ENCODE measurements at regions of chr19 and their contacts with region 1.

Region 1: GRCh38 chr19:42280192-42281145 is 11.4 kb downstream of the CIC start:
- DNase-seq: peak; percentile 60
- H3K4me3 ChIP-seq: peak overlapping the region; percentile 75
- H3K27ac ChIP-seq: peak overlapping the region; percentile 47
- H3K27me3 ChIP-seq: no peaks in the 10 kb centered on the region
- CTCF ChIP-seq: no peak

Region 2: GRCh38 chr19:42132851-42133528 is 147.5 kb before region 1 on chr19:
- CTCF ChIA-PET with region 1: interaction called, 11 read pairs
- POLR2A ChIA-PET with region 1: no interaction called
- DNase-seq: no peak
- H3K4me3 ChIP-seq: peak overlapping the region; percentile 60
- H3K27ac ChIP-seq: no peak overlapping the region
- H3K27me3 ChIP-seq: peaks cover 9% of the 10 kb centered on the region
- CTCF ChIP-seq: peak; percentile 85

Region 3: DNA sequence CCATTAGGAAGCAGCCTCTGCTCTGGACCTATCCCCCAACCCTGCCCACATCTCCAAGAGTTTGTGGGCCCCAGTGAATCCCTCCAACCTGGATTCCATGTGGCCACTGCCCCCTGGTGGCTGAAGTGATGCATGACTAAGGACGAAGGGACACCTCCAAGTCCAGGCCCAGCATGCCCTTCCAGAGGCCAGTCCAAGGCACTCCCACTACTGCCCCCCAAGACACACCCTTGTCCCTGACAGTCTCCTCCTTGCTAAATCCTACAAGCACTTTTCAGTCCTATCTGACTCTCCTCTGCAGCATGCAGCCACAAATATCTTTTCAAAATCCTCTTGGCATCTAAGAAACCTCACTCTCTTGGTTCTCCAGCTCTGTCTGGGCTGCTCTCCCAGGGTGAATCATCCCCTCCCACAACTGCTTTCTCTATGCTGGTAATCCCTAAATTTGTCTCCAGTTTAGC is 96.0 kb before region 1 on chr19:
- CTCF ChIA-PET with region 1: no interaction called
- POLR2A ChIA-PET with region 1: no interaction called
- DNase-seq: peak; percentile 44
- H3K4me3 ChIP-seq: no peak overlapping the region
- H3K27ac ChIP-seq: no peak overlapping the region
- H3K27me3 ChIP-seq: peaks cover 23% of the 10 kb centered on the region
- CTCF ChIP-seq: peak; percentile 92

Region 4: DNA sequence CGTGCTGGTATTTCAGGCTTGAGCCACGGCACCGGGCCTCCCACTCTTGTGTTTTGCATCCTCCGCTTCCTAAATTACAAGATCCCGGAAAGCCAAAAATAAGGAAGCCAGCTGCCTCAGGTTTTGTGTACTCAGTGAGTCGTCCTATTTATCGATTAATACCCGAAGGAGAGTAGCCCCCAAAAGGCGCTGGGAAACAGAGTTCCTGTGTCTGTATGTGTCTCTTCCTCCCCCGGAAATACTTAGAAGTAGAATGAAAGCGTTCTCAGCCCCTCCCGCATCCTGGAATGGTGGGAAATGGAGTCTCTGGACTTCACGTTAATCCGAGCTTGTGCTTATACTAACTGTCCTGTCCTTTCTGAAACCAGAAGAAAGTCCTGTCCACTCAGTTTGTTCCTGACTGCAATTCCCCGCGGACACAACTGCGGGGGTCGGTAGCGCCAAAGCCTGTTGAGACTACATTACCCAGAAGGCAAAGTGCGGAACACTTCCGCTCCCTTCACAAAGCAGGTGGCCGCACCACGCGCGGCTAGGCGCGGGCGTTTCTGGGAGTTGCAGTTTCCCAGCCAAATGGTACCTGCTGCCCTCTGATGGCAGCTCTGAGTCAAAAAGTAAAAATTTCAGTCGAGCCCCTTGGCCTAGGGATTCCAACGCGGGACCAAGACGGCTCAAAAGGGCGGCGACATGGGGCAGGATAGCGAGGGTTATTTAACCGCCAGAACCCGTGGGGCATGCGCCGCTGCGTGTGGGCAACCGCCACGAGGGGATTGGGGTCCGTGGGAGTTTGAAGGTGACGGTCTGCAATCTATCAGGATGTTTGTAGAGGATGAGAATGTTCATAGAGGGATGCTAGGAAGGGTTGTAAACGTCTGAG is 35.9 kb before region 1 on chr19:
- CTCF ChIA-PET with region 1: interaction called, 118 read pairs
- POLR2A ChIA-PET with region 1: interaction called, 11 read pairs
- DNase-seq: peak; percentile 85
- H3K4me3 ChIP-seq: peak overlapping the region; percentile 79
- H3K27ac ChIP-seq: peak overlapping the region; percentile 65
- H3K27me3 ChIP-seq: no peaks in the 10 kb centered on the region
- CTCF ChIP-seq: peak; percentile 71

Region 5: DNA sequence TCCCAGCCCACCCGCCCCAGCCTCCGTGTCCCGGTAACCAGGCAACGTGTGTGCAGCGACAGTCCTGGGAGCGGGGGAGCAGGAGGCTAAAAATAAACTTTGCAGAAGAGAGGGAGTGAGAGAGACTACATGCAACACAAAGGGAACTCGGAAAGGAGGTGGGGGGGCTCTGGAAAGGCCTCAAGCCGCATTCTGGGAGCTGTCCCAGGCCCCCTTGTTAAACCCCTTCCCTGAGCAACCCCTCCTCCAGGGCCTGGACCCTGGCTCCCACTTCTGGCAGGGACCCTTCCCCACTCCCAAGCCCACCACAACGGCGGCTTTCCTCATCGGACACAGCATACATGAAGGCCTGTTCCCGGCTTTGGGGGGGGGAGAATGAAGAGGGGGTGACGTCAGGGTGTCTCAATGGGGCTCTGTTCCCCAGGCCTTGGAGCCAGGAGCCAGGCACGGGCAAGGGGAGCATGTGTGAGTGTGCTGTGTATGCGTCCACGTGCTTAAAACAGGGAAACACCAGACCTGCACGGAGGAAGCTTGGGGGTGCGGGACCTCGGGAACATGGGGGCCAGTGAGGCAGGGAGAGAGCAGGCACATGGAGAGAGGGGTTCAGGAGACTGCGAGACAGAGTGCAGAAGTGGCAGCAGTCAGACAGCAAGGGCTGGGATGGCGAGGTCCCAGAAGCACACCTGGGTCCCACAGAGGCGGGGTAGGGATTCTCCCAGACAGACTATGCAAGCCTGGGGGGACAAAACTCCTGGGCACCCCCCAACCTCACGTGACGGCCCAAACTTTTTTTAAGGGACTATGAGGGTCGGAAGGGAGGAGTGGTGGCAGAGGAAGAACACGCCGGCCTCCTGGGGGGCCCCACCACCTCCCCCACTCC is 27.9 kb before region 1 on chr19:
- CTCF ChIA-PET with region 1: interaction called, 118 read pairs
- POLR2A ChIA-PET with region 1: interaction called, 8 read pairs
- DNase-seq: no peak
- H3K4me3 ChIP-seq: peak overlapping the region; percentile 84
- H3K27ac ChIP-seq: peak overlapping the region; percentile 82
- H3K27me3 ChIP-seq: no peaks in the 10 kb centered on the region
- CTCF ChIP-seq: no peak

Region 6: GRCh38 chr19:42268704-42269477 is 11.6 kb before region 1 on chr19 and contains the start of gene CIC:
- CTCF ChIA-PET with region 1: interaction called, 22 read pairs
- POLR2A ChIA-PET with region 1: interaction called, 8 read pairs
- DNase-seq: peak; percentile 100
- H3K4me3 ChIP-seq: peak within 1 kb of the TSS; percentile 94
- H3K27ac ChIP-seq: peak within 1 kb of the TSS; percentile 98
- H3K27me3 ChIP-seq: no peaks in the 10 kb centered on the region
- CTCF ChIP-seq: no peak
- polyA plus RNA-seq, gene CIC: 2.9 and 4.2 TPM in 2 replicates

Region 7: GRCh38 chr19:42316223-42317211 is 36.0 kb after region 1 on chr19:
- CTCF ChIA-PET with region 1: interaction called, 3 read pairs
- POLR2A ChIA-PET with region 1: interaction called, 11 read pairs
- DNase-seq: no peak
- H3K4me3 ChIP-seq: no peak overlapping the region
- H3K27ac ChIP-seq: no peak overlapping the region
- H3K27me3 ChIP-seq: peaks cover 11% of the 10 kb centered on the region
- CTCF ChIP-seq: no peak

Region 8: GRCh38 chr19:42328106-42328505 is 47.6 kb after region 1 on chr19:
- CTCF ChIA-PET with region 1: no interaction called
- POLR2A ChIA-PET with region 1: no interaction called
- DNase-seq: no peak
- H3K4me3 ChIP-seq: no peak overlapping the region
- H3K27ac ChIP-seq: no peak overlapping the region
- H3K27me3 ChIP-seq: peaks cover 13% of the 10 kb centered on the region
- CTCF ChIP-seq: no peak

Region 9: DNA sequence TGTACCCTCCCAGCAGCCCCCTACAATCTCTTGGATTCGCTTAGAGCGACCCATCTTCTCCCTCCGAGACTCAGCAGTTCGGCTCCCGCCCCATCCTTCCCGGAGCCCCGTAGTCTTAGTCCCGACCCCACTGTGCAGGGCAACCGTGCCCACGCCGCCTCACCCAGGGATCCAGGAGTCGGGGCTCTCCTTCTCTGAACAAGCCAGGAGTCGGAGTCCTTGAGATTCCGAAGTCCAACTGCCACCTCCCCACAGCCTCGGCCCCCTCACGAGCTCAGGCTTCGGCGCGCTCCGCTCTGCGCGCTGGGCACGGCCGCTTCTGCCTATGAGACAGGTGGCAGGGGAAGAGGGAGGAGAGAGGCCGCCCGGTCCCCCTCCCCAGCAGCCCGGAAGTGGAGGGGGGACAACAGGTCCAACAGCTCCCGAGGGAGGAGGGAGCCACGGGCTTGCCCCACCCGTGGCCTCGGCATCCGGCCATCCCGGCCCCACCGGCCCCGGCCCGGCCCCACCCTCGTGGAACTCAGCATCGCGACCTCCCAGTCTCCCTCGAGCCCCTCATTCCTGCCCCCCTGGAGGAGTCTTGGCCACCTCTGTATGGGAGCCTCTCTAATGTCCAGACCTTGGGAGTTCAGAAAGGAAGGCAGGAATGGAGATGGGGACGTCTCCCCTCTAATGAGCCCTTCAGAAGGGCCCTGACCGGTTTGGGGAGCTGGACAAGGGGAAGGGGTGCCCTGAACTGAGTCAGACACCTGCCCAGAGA is 1224.1 kb after region 1 on chr19 and contains the start of gene PHLDB3:
- CTCF ChIA-PET with region 1: no interaction called
- POLR2A ChIA-PET with region 1: no interaction called
- DNase-seq: no peak
- H3K4me3 ChIP-seq: peak within 1 kb of the TSS; percentile 91
- H3K27ac ChIP-seq: peak within 1 kb of the TSS; percentile 68
- H3K27me3 ChIP-seq: no peaks in the 10 kb centered on the region
- CTCF ChIP-seq: no peak
- polyA plus RNA-seq, gene PHLDB3: 4.2 and 5.9 TPM in 2 replicates

Measured in AG04450 (cell line).